PC-3 (cell line): ENCODE measurements at regions of chr12 and their contacts with region 1.

Region 1: DNA sequence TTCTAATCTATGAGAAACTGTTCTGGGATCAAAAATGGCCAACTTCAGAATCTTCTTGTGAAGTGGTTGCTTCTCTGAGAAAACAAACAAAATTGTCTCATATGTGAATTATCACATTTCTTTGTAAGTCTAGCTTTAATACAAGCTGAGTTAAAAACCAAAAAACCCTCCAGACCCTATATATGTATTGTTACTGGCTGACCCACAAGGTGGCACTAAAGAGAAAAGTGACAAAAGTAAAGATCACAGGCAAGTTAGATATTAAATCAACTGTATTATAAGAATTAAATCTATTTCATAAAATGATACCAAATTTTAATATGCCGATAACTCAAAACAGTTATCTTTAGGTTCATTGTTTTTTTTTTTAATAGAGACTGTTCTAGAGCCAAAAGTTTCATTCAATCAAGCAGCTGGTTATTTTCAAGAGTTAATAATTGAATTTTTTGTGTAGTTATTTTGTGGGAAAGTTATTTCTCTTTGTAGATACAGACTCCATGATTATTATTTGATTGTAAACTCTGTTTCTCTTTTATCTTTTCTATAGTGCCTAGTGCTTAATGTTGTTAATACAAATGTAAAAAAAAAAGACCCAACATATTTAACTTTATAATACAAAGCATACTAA is 7.5 kb upstream of the TRHDE start:
- DNase-seq: peak; percentile 62
- ATAC-seq: peak; percentile 36; the same call in 1 of the 2 replicates
- H3K4me3 ChIP-seq: no peak overlapping the region
- H3K27ac ChIP-seq: no peak overlapping the region
- H3K4me1 ChIP-seq: peaks cover 31% of the 10 kb centered on the region
- H3K27me3 ChIP-seq: no peaks in the 10 kb centered on the region
- CTCF ChIP-seq: peak; percentile 77

Region 2: GRCh38 chr12:72017054-72017651 is 247.5 kb before region 1 on chr12:
- CTCF ChIA-PET with region 1: interaction called, 21 read pairs
- POLR2A ChIA-PET with region 1: no interaction called
- intact Hi-C with region 1: loop called (anchors 1 kb)
- DNase-seq: peak; percentile 87
- ATAC-seq: peak; percentile 99
- H3K4me3 ChIP-seq: no peak overlapping the region
- H3K27ac ChIP-seq: no peak overlapping the region
- H3K4me1 ChIP-seq: no peaks in the 10 kb centered on the region
- H3K27me3 ChIP-seq: no peaks in the 10 kb centered on the region
- CTCF ChIP-seq: peak; percentile 86

Region 3: DNA sequence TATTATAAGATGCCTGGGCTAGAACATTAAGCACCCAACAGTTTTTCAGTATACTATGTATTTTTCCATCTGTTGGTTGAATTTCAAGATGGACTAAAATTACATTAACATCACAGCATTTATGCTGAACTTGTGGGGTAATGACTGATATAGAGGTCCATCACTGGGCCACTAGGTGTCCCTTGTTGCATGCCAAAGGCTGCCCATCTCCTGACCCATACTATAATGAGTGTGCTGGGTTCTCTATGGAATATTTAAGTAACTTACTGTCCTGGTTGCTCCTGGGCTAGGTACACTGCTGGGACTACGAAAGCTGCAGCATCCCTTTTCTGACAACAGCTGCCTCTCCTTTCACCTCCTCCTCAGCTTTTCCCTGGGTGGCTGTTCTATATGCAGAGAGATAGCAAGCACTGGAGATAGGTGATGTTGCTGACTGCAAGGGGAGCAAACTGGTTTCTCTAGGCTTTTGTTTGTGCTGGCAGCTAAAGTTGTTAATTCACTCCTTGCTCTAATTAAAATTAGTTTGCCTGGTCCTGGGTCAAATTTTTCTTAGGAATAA is 131.1 kb before region 1 on chr12:
- CTCF ChIA-PET with region 1: no interaction called
- POLR2A ChIA-PET with region 1: no interaction called
- intact Hi-C with region 1: loop called (anchors 1 kb)
- DNase-seq: peak; percentile 28
- ATAC-seq: peak; percentile 90
- H3K4me3 ChIP-seq: no peak overlapping the region
- H3K27ac ChIP-seq: no peak overlapping the region
- H3K4me1 ChIP-seq: no peaks in the 10 kb centered on the region
- H3K27me3 ChIP-seq: peaks cover 49% of the 10 kb centered on the region
- CTCF ChIP-seq: peak; percentile 50

Region 4: GRCh38 chr12:72282721-72283120 is 18.1 kb after region 1 on chr12:
- CTCF ChIA-PET with region 1: interaction called, 7 read pairs
- POLR2A ChIA-PET with region 1: no interaction called
- intact Hi-C with region 1: loop called (anchors 1 kb)
- DNase-seq: peak; percentile 66
- ATAC-seq: peak; percentile 76
- H3K4me3 ChIP-seq: no peak overlapping the region
- H3K27ac ChIP-seq: no peak overlapping the region
- H3K4me1 ChIP-seq: peaks cover 47% of the 10 kb centered on the region
- H3K27me3 ChIP-seq: no peaks in the 10 kb centered on the region
- CTCF ChIP-seq: peak; percentile 86

Region 5: DNA sequence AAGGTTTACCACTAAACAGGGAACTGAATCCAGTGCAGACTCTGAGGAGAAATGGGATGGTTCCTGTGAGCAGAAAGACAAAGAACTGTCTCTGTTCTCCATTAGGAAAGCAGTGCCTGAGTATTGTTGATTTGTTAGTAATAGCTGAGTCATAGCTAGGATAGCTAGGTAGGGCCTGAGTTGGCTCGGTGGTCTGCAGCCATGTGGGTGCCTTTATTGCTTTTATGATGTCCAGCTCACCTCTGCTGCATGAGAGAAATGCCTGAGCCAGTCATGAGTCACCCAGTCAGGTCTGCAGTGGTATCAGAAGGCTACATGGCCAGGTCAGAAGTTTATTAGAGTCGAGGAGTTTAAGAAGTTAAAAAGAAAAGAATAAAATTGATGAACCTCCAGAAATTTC is 31.7 kb after region 1 on chr12:
- CTCF ChIA-PET with region 1: interaction called, 3 read pairs
- POLR2A ChIA-PET with region 1: no interaction called
- intact Hi-C with region 1: loop called (anchors 1 kb)
- DNase-seq: peak; percentile 95
- ATAC-seq: peak; percentile 89
- H3K4me3 ChIP-seq: peak overlapping the region; percentile 48
- H3K27ac ChIP-seq: peak overlapping the region; percentile 98
- H3K4me1 ChIP-seq: peaks cover 44% of the 10 kb centered on the region
- H3K27me3 ChIP-seq: no peaks in the 10 kb centered on the region
- CTCF ChIP-seq: no peak